ENCODE measurements at regions of chr5 and their contacts with region 1.

Region 1: GRCh38 chr5:142611154-142611553 is 74.7 kb downstream of the FGF1 start:
- DNase-seq: peak; percentile 85
- ATAC-seq: peak; percentile 97; the same call in 1 of the 2 replicates
- H3K4me3 Mint-ChIP-seq: no peak overlapping the region
- H3K27ac Mint-ChIP-seq: no peak overlapping the region
- H3K4me1 Mint-ChIP-seq: peaks cover 9% of the 10 kb centered on the region
- H3K27me3 Mint-ChIP-seq: no peaks in the 10 kb centered on the region
- CTCF ChIP-seq: peak; percentile 79

Region 2: GRCh38 chr5:142472300-142472951 is 138.7 kb before region 1 on chr5:
- CTCF ChIA-PET with region 1: no interaction called
- POLR2A ChIA-PET with region 1: no interaction called
- DNase-seq: no peak
- ATAC-seq: no peak
- H3K4me3 Mint-ChIP-seq: no peak overlapping the region
- H3K27ac Mint-ChIP-seq: no peak overlapping the region; the same call in 1 of the 2 replicates
- H3K4me1 Mint-ChIP-seq: peaks cover 43% of the 10 kb centered on the region
- H3K27me3 Mint-ChIP-seq: no peaks in the 10 kb centered on the region; the same call in 1 of the 2 replicates
- CTCF ChIP-seq: no peak

Region 3: GRCh38 chr5:142685418-142686209 is 74.5 kb after region 1 on chr5 and contains the start of gene FGF1:
- CTCF ChIA-PET with region 1: interaction called, 11 read pairs
- POLR2A ChIA-PET with region 1: no interaction called
- DNase-seq: no peak
- ATAC-seq: no peak; the same call in 1 of the 2 replicates
- H3K4me3 Mint-ChIP-seq: no peak within 1 kb of the TSS
- H3K27ac Mint-ChIP-seq: peak within 1 kb of the TSS; percentile 93
- H3K4me1 Mint-ChIP-seq: peaks cover 50% of the 10 kb centered on the region
- H3K27me3 Mint-ChIP-seq: no peaks in the 10 kb centered on the region
- CTCF ChIP-seq: no peak
- total RNA-seq, gene FGF1: 0.21 to 0.55 TPM in 2 of 3 replicates, not detected in the other

Measured in WTC11 (cell line).